ENCODE measurements at regions of chr1 and their contacts with region 1.

Region 1: GRCh38 chr1:202009326-202010179 is 834 bp upstream of the ELF3 start:
- DNase-seq: peak; percentile 80
- H3K4me3 Mint-ChIP-seq: no peak overlapping the region
- H3K27ac Mint-ChIP-seq: no peak overlapping the region
- H3K4me1 Mint-ChIP-seq: no peaks in the 10 kb centered on the region
- H3K27me3 Mint-ChIP-seq: no peaks in the 10 kb centered on the region

Region 2: GRCh38 chr1:202056644-202057461 is 47.3 kb after region 1 on chr1:
- CTCF ChIA-PET with region 1: no interaction called
- intact Hi-C with region 1: no loop called
- DNase-seq: no peak
- H3K4me3 Mint-ChIP-seq: no peak overlapping the region
- H3K27ac Mint-ChIP-seq: peak overlapping the region; percentile 24
- H3K4me1 Mint-ChIP-seq: no peaks in the 10 kb centered on the region
- H3K27me3 Mint-ChIP-seq: peaks cover 3% of the 10 kb centered on the region

Region 3: GRCh38 chr1:202122639-202123335 is 113.2 kb after region 1 on chr1 and contains the start of gene GPR37L1:
- CTCF ChIA-PET with region 1: interaction called, 4 read pairs
- intact Hi-C with region 1: loop called (anchors 1 kb)
- DNase-seq: no peak
- H3K4me3 Mint-ChIP-seq: no peak within 1 kb of the TSS
- H3K27ac Mint-ChIP-seq: no peak within 1 kb of the TSS
- H3K4me1 Mint-ChIP-seq: no peaks in the 10 kb centered on the region
- H3K27me3 Mint-ChIP-seq: peaks cover 7% of the 10 kb centered on the region
- total RNA-seq, gene GPR37L1: not detected

Region 4: DNA sequence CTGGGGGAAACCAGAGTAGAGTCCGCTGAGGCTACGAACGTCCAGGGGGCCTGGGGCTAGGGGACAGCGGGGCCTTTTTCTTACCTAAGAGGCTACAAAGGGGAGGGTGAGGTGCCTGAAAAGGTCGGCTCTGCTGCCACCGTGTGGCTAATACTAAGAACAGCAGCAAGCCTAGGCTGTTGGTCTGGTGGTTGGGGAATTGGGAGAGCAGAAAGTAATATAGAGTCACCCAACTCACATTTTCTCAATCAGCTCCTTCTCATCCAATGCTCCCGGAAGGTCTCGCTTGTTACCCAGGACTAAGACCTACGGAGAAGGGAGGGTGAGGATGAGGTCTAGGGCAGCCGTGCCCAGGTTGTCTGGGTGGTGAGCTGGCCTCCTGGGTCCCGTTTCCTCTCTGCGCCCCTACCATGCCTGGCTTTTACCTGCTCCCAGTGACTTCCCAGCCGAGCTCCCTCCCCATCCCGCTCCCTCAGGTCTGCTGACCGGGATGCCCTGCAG is 125.7 kb after region 1 on chr1:
- CTCF ChIA-PET with region 1: interaction called, 23 read pairs
- intact Hi-C with region 1: loop called (anchors 1 kb)
- DNase-seq: peak; percentile 61
- H3K4me3 Mint-ChIP-seq: no peak overlapping the region
- H3K27ac Mint-ChIP-seq: no peak overlapping the region
- H3K4me1 Mint-ChIP-seq: no peaks in the 10 kb centered on the region
- H3K27me3 Mint-ChIP-seq: no peaks in the 10 kb centered on the region

Measured in activated naive CD4-positive, alpha-beta T cell treated with anti-CD3 and anti-CD28 coated beads for 36 hours (primary cell).